ENCODE measurements at regions of chr5 and their contacts with region 1.

Region 1: DNA sequence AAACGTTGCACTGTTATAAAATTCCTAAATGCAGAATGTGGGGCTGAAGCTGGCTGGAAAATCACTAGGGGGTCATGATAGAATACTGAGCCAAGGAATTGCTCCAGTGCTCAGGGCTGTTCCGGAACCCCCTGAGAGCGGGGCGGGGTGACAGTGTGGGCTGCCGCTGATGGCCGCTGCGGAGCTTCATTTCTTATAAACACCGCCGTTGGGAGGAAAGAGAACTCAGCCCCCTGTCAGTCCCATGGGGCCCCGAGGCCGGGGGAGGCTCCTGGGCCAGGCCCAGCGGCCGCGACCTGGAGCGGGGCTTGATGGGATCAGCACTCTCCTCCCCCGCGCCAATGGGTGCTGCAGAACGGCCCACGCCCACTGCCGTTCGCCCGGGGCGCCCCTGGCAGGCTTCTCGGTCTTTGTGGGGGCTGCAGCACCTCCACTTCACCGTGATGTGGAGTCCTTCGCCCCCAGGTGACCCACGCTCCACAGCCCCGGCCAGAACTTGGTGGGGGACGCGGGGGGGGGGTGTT is 5.2 kb upstream of the IRF1 start:
- DNase-seq: peak; percentile 94
- H3K4me3 ChIP-seq: peak overlapping the region; percentile 55 to 76 (median 62)
- H3K27ac ChIP-seq: peak overlapping the region; percentile 93 to 100 (median 98)
- H3K4me1 ChIP-seq: peaks cover 0 to 54% (median 44%) of the 10 kb centered on the region in 4 donors
- H3K27me3 ChIP-seq: no peaks in the 10 kb centered on the region
- CTCF ChIP-seq: no peak
- EP300 ChIP-seq: peak in 3 of 4 donors; percentile 3 to 32 (median 23)
- POLR2A ChIP-seq: peak in 1 of 2 donors; percentile 4

Region 2: DNA sequence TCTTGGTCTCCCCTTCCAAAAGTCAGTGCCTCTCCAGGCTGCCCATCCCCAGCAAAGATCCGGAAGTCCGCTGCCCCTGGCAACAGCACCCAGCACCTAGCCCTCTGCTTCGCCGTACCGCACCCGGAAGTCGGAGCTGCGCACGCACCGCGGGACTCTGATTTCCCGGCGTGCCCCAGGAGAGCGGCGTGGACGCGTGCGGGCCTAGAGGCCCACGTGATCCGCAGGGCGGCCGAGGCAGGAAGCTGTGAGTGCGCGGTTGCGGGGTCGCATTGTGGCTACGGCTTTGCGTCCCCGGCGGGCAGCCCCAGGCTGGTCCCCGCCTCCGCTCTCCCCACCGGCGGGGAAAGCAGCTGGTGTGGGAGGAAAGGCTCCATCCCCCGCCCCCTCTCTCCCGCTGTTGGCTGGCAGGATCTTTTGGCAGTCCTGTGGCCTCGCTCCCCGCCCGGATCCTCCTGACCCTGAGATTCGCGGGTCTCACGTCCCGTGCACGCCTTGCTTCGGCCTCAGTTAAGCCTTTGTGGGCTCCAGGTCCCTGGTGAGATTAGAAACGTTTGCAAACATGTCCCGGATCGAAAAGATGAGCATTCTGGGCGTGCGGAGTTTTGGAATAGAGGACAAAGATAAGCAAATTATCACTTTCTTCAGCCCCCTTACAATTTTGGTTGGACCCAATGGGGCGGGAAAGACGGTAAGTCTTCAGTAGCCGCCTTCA is 61.2 kb after region 1 on chr5 and contains the start of gene RAD50:
- intact Hi-C with region 1: loop called (anchors 5 kb)
- DNase-seq: peak; percentile 97
- H3K4me3 ChIP-seq: peak within 1 kb of the TSS; percentile 51 to 80 (median 75)
- H3K27ac ChIP-seq: peak within 1 kb of the TSS; percentile 89 to 92 (median 91)
- H3K4me1 ChIP-seq: peaks cover 0 to 21% (median 19%) of the 10 kb centered on the region in 4 donors
- H3K27me3 ChIP-seq: no peaks in the 10 kb centered on the region
- CTCF ChIP-seq: no peak
- EP300 ChIP-seq: peak in 1 of 4 donors; percentile 78
- POLR2A ChIP-seq: peak; percentile 70 to 77
- total RNA-seq, gene RAD50: 20.0 to 34.6 (median 29.3) TPM

Region 3: DNA sequence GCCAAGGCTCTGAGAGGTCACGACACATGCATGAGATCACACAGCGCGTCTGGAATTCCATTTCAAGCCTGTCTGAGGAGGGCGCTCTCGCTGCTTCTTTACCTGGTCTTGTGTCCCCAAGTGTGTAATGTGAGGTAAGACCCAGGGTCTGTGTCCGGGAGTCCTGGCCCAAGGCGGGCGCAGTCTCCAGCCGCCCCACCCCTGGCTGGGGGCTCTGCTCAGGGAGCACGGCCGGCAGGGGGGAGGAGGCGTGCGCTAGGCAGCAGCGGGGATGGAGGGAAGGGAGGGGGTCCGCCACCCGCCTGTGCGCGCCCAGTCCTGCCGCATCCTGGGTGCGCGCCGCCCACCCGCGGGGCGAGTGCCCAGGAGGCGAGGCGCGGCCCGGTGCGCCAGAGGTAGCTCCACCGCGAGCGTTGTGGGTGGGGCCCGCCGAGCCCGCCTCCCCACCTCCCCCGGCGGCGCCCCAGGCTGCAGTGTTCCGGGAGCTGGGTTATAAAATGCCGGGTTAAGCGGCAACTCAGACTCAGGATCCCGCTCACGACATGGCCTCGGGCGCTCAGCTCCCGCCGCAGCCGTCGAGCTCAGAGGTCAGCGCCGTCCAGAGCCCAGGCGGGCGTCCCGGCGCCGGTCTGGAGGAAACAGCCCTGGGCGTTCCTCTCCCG is 251.4 kb after region 1 on chr5 and contains the start of gene CCNI2:
- intact Hi-C with region 1: no loop called
- DNase-seq: no peak
- H3K4me3 ChIP-seq: peak within 1 kb of the TSS in 3 of 4 donors; percentile 21 to 46 (median 41)
- H3K27ac ChIP-seq: no peak within 1 kb of the TSS
- H3K4me1 ChIP-seq: peaks cover 0 to 13% (median 11%) of the 10 kb centered on the region in 4 donors
- H3K27me3 ChIP-seq: peaks cover 20 to 54% (median 36%) of the 10 kb centered on the region in 3 donors
- CTCF ChIP-seq: no peak
- EP300 ChIP-seq: no peak
- POLR2A ChIP-seq: no peak
- total RNA-seq, gene CCNI2: 1.4 TPM in 1 of 4 donors, not detected in the others

Measured in sigmoid colon (tissue), 7 donors.